CD14-positive monocyte (primary cell): ENCODE measurements at regions of chr21 and their contacts with region 1.

Region 1: DNA sequence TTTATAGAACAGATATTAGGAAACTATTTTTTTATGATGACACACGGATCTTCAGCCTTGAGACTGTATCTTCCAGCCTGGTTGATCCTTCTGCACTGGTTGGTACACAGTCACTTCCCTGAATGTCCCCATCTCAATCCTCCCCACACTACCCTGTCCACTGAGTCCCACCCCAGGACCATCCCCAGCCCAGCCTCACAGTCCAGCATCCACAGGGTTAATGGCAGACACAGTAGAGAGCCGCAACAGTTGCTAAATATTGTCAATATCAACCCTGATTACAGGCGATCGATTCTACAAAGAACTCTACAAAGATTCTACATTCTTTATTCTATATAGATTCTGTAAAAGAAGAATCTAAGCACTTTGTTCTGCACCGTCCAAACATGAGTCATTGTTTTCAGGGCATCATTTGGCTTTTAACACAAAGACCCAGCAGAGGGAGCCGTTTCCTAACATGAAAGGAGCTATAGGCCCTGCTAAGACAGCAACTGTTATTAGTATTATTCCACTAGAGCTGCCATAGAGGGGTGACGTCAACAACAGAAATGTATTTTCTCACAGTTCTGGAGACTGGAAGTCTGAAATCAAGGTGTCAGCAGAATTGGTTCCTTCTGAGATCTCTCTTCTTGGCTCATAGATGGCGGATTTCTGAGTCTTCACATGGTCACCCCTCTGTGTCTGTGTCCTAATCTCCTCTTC is 30.1 kb upstream of the IFNAR2 start:
- DNase-seq: peak; percentile 95 to 98 (median 98)
- H3K4me3 ChIP-seq: peak overlapping the region in 1 of 3 experiments; percentile 34
- H3K4me3 Mint-ChIP-seq: peak overlapping the region in 1 of 2 donors; percentile 74
- H3K27ac ChIP-seq: peak overlapping the region; percentile 74 to 91
- H3K27ac Mint-ChIP-seq: peak overlapping the region; percentile 93 to 99 (median 98)
- H3K4me1 ChIP-seq: peaks cover 61 to 73% of the 10 kb centered on the region in 2 donors
- H3K4me1 Mint-ChIP-seq: peaks cover 66% of the 10 kb centered on the region
- H3K27me3 ChIP-seq: no peaks in the 10 kb centered on the region
- H3K27me3 Mint-ChIP-seq: peaks cover 0 to 8% (median 6%) of the 10 kb centered on the region in 3 donors
- CTCF ChIP-seq: peak; percentile 80

Region 2: GRCh38 chr21:33007747-33008146 is 191.9 kb before region 1 on chr21:
- intact Hi-C with region 1: loop called in 1 of 2 experiments (anchors 10 kb)
- DNase-seq: peak; percentile 95 to 99 (median 98)
- H3K4me3 ChIP-seq: peak overlapping the region in 1 of 3 experiments; percentile 46
- H3K4me3 Mint-ChIP-seq: peak overlapping the region; percentile 43 to 80
- H3K27ac ChIP-seq: peak overlapping the region; percentile 97 to 99
- H3K27ac Mint-ChIP-seq: peak overlapping the region; percentile 96 to 100 (median 98)
- H3K4me1 ChIP-seq: peaks cover 64 to 71% of the 10 kb centered on the region in 2 donors
- H3K4me1 Mint-ChIP-seq: peaks cover 77% of the 10 kb centered on the region
- H3K27me3 ChIP-seq: no peaks in the 10 kb centered on the region
- H3K27me3 Mint-ChIP-seq: peaks cover 0 to 3% (median under 1%) of the 10 kb centered on the region in 3 donors
- CTCF ChIP-seq: no peak

Region 3: DNA sequence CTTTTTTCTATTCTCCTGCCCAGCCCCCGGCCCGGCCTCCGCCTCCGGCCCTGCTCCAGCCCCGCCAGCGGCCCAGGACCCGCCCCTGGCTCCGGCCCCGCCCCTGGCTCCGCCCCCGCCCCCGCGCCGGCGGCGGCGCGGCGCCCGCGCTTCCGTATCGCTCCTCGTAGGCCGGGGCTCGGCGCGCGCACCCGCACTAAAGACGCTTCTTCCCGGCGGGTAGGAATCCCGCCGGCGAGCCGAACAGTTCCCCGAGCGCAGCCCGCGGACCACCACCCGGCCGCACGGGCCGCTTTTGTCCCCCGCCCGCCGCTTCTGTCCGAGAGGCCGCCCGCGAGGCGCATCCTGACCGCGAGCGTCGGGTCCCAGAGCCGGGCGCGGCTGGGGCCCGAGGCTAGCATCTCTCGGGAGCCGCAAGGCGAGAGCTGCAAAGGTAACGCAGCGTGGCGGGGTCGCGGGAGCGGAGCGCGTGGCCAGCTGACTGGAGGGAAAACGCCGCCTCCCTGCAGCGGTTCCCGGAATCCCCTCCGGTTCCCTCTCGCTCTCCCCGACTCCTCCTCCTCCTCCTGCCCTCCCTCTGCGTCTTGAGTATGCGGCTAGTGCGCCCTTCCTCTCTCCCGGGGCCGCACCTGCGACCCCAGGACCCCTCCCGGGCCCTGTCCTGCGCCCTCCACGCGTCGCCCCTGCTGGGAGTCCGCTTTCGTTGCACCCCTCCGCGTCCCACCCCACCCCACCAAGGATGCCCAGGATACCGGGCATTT is 30.3 kb after region 1 on chr21 and contains the start of gene IFNAR2:
- intact Hi-C with region 1: loop called in 1 of 2 experiments (anchors 5 kb)
- DNase-seq: peak; percentile 58 to 69 (median 64)
- H3K4me3 ChIP-seq: peak within 1 kb of the TSS; percentile 92 to 99 (median 97)
- H3K4me3 Mint-ChIP-seq: peak within 1 kb of the TSS; percentile 90 to 93
- H3K27ac ChIP-seq: peak within 1 kb of the TSS; percentile 88 to 95
- H3K27ac Mint-ChIP-seq: peak within 1 kb of the TSS; percentile 87 to 96 (median 92)
- H3K4me1 ChIP-seq: peaks cover 43 to 54% of the 10 kb centered on the region in 2 donors
- H3K4me1 Mint-ChIP-seq: peaks cover 49% of the 10 kb centered on the region
- H3K27me3 ChIP-seq: no peaks in the 10 kb centered on the region
- H3K27me3 Mint-ChIP-seq: peaks cover 0 to 3% (median under 1%) of the 10 kb centered on the region in 3 donors
- CTCF ChIP-seq: no peak
- polyA plus RNA-seq, gene IFNAR2: 47.7 to 79.8 (median 59.5) TPM

Region 4: GRCh38 chr21:33360881-33361602 is 161.4 kb after region 1 on chr21:
- intact Hi-C with region 1: loop called (anchors 5 to 10 kb)
- DNase-seq: peak; percentile 71 to 75 (median 71)
- H3K4me3 ChIP-seq: peak overlapping the region; percentile 12 to 70 (median 14)
- H3K4me3 Mint-ChIP-seq: peak overlapping the region; percentile 74 to 88
- H3K27ac ChIP-seq: peak overlapping the region; percentile 81 to 94
- H3K27ac Mint-ChIP-seq: peak overlapping the region; percentile 95 to 99 (median 99)
- H3K4me1 ChIP-seq: peaks cover 50 to 53% of the 10 kb centered on the region in 2 donors
- H3K4me1 Mint-ChIP-seq: peaks cover 49% of the 10 kb centered on the region
- H3K27me3 ChIP-seq: no peaks in the 10 kb centered on the region
- H3K27me3 Mint-ChIP-seq: peaks cover 0 to 4% (median 0%) of the 10 kb centered on the region in 3 donors
- CTCF ChIP-seq: peak; percentile 93

Region 5: DNA sequence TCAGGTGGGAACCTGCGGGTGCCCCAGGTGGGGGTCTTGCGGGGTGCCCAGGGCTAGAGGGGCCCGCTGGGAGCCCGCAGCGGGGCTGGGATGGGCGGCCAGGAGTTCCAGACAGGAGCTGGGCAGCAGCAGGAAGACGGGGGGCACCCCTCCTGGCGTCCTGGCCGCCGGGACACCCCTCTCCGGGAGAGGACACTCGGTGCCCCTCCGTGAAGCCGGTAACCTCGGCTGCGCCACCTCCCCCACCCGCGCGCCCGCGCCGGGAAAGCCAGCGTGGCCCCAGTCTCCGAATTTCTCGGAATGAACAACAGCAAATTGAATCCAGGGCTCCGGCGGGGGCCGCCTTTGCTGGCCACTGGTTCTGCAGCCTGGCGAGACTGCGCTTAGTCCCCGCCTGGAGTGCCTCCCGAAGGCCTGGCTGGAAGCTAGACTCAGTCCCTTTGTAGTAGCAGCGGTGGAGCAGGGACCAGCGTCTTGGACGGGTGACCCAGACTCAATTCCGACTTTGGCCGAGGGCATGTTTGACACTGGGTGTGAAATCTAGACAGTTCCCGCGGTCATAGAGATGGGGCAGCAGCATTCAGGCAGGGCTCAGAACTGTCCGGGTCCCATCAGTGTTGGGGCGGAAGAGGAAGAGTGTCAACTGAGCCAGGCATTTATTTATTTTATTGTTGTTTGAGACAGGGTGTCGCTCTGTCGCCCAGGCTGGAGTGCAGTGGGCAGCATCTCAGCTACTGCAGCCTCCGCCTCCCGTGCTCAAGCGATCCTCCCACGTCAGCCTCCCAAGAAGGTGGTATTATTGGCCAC is 204.3 kb after region 1 on chr21:
- intact Hi-C with region 1: loop called in 1 of 2 experiments (anchors 5 kb)
- DNase-seq: peak; percentile 41 to 50 (median 48)
- H3K4me3 ChIP-seq: peak overlapping the region; percentile 83 to 100 (median 99)
- H3K4me3 Mint-ChIP-seq: peak overlapping the region; percentile 99 to 100
- H3K27ac ChIP-seq: peak overlapping the region; percentile 98 to 100
- H3K27ac Mint-ChIP-seq: peak overlapping the region; percentile 98 to 100 (median 99)
- H3K4me1 ChIP-seq: peaks cover 81 to 83% of the 10 kb centered on the region in 2 donors
- H3K4me1 Mint-ChIP-seq: peaks cover 66% of the 10 kb centered on the region
- H3K27me3 ChIP-seq: no peaks in the 10 kb centered on the region
- H3K27me3 Mint-ChIP-seq: no peaks in the 10 kb centered on the region
- CTCF ChIP-seq: no peak

Region 6: DNA sequence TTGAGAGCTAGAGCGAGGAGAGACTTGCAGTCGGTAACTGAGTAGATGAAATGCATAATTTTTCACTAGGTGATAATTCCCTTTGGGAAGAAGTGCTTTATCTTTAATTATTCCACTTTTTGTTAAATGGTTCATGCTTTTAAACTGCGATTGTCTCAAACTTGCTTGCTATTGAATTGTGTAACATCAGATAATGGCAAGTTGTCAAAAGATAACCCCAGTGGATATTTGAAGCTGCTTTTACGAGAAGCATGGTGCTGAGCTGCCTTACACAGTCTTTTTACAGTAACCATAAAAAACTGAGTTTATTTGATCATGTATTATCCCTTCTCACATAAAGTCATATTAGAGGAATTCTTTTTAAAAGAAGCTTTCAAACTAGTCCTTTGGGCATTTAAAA is 249.9 kb after region 1 on chr21:
- intact Hi-C with region 1: loop called (anchors 5 kb)
- DNase-seq: no peak
- H3K4me3 ChIP-seq: no peak overlapping the region
- H3K4me3 Mint-ChIP-seq: no peak overlapping the region
- H3K27ac ChIP-seq: no peak overlapping the region
- H3K27ac Mint-ChIP-seq: no peak overlapping the region
- H3K4me1 ChIP-seq: peaks cover 4 to 8% of the 10 kb centered on the region in 2 donors
- H3K4me1 Mint-ChIP-seq: peaks cover 4% of the 10 kb centered on the region
- H3K27me3 ChIP-seq: no peaks in the 10 kb centered on the region
- H3K27me3 Mint-ChIP-seq: no peaks in the 10 kb centered on the region
- CTCF ChIP-seq: no peak